GM12878 (cell line): ENCODE measurements at regions of chr4 and their contacts with region 1.

Region 1: DNA sequence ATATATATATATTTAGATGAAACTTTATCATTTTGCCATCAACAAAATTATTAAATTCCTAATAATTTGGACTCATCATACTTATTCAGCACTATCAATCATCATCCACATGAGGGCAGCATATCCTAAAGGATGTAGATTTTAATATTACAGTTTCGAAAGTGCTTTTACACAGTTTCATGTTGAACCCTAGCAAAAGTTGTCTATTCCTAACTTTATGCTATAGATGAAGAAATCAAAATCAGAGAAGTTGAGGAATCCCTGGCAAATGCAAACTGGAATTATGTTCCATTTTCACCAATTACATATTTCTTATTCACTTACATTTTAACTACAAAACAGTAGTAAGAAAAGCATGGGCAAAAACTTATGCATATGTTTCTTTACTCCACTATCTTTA is 36.6 kb upstream of the UGT2A1 start:
- DNase-seq: no peak
- ATAC-seq: peak; percentile 44; the same call in 1 of the 3 replicates
- H3K4me3 ChIP-seq: no peak overlapping the region
- H3K27ac ChIP-seq: no peak overlapping the region
- H3K4me1 ChIP-seq: no peaks in the 10 kb centered on the region
- H3K27me3 ChIP-seq: no peaks in the 10 kb centered on the region
- CTCF ChIP-seq: peak; percentile 21 to 61 (median 39); a peak in 3 of 6 replicates
- EP300 ChIP-seq: no peak
- POLR2A ChIP-seq: no peak
- RAD21 ChIP-seq: peak; percentile 85

Region 2: DNA sequence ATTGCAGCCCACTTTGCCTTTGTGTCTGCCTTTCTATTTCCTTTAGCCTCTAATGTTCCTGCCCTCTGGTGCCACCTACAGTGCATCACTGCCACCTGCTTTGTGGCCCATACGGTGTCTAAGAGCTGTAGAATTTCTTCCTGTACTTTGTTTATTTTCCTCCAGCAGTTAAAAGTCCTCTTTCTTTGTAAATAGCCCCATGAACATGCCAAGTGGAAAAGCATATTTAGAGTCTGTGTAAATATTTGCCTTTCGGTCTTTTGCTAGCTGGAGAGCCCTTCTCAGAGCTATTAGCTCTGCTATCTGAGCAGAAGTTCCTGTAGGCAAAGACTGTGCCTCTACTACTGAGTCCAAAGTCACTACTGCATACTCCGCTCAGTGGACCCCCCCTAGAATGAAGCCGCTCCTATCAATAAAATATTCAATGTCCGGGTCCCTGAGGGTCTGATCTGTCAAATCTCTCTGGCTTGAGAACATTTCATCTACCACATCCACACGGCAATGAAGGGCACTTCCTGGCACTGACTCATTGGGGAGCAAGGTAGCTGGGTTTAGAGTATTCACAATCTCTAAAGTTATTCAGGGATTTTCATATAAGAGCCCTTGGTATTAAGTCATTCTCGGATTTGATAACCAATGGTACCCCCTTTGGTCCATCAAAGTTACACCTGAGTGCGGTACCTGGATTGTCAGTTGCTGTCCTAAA is 134.0 kb after region 1 on chr4:
- CTCF ChIA-PET with region 1: interaction called, 6 read pairs
- POLR2A ChIA-PET with region 1: no interaction called
- RAD21 ChIA-PET with region 1: interaction called, 3 read pairs
- SMC1A ChIA-PET with region 1: interaction called, 5 read pairs
- in situ Hi-C with region 1: no loop called
- intact Hi-C with region 1: loop called (anchors 2 kb)
- DNase-seq: no peak
- ATAC-seq: peak; percentile 97
- H3K4me3 ChIP-seq: no peak overlapping the region
- H3K27ac ChIP-seq: no peak overlapping the region
- H3K4me1 ChIP-seq: no peaks in the 10 kb centered on the region
- H3K27me3 ChIP-seq: no peaks in the 10 kb centered on the region
- CTCF ChIP-seq: peak; percentile 52 to 60 (median 58); a peak in 5 of 6 replicates
- EP300 ChIP-seq: no peak
- POLR2A ChIP-seq: no peak
- RAD21 ChIP-seq: peak; percentile 43; the same call in 1 of the 2 replicates